Activated CD4-positive, alpha-beta T cell treated with anti-CD3 and anti-CD28 coated beads for 36 hours (primary cell): ENCODE measurements at regions of chr17 and their contacts with region 1.

Region 1: DNA sequence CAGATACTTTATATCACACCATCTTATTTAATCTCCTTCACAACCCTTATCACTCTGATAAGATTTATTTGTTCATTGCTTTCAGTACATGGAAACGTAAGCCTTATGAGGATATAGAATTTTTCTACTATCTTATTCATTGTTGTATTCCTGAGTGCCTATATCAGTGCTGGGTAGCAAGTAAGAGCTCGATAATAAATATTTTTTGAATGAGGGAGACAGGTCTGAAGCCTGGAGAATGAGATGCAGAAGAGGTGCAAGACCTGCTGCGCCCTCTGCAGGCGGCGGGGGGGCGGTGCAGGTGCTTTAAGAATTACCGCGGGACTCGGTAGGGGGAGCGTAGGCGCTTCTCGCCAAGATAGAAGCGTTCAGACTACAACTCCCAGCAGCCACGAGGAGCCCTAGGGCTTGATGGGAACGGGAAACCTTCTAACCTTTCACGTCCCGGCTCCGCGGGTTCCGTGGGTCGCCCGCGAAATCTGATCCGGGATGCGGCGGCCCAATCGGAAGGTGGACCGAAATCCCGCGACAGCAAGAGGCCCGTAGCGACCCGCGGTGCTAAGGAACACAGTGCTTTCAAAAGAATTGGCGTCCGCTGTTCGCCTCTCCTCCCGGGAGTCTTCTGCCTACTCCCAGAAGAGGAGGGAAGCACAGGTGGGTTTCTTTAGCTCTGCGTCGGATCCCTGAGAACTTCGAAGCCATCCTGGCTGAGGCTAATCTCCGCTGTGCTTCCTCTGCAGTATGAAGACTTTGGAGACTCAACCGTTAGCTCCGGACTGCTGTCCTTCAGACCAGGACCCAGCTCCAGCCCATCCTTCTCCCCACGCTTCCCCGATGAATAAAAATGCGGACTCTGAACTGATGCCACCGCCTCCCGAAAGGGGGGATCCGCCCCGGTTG is at the start of gene WRAP53:
- DNase-seq: peak; percentile 97
- ATAC-seq: peak; percentile 81
- H3K4me3 Mint-ChIP-seq: peak within 1 kb of the TSS; percentile 83
- H3K27ac Mint-ChIP-seq: peak within 1 kb of the TSS; percentile 97
- H3K4me1 Mint-ChIP-seq: peaks cover 35% of the 10 kb centered on the region
- H3K27me3 Mint-ChIP-seq: no peaks in the 10 kb centered on the region
- total RNA-seq, gene WRAP53: 23.5 to 27.1 TPM

Region 2: DNA sequence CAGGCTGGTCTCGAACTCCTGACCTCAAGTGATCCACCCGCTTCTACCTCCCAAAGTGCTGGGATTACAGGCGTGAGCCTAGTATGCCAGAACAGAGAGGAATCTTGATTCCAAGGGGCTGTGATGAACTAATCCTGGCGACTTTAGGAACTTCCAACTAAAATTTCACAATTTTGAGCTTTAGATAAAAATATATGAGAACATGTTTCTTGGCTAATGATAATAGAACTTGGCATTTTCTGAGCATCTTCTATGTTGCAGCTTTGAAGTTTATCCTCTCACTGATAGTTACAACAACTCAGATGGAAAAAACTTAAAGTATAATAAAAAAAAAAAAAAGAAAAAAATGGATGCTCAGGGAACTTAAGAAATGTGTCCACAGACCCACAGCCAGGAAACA is 1687.7 kb before region 1 on chr17:
- CTCF ChIA-PET with region 1: no interaction called
- POLR2A ChIA-PET with region 1: no interaction called
- intact Hi-C with region 1: no loop called
- DNase-seq: no peak
- ATAC-seq: no peak
- H3K4me3 Mint-ChIP-seq: no peak overlapping the region
- H3K27ac Mint-ChIP-seq: no peak overlapping the region
- H3K4me1 Mint-ChIP-seq: no peaks in the 10 kb centered on the region
- H3K27me3 Mint-ChIP-seq: peaks cover 12% of the 10 kb centered on the region

Region 3: GRCh38 chr17:7252176-7253043 is 435.7 kb before region 1 on chr17 and contains the start of gene ELP5:
- CTCF ChIA-PET with region 1: no interaction called
- POLR2A ChIA-PET with region 1: no interaction called
- intact Hi-C with region 1: loop called in 1 of 2 experiments (anchors 1 kb)
- DNase-seq: peak; percentile 94
- ATAC-seq: peak; percentile 65
- H3K4me3 Mint-ChIP-seq: peak within 1 kb of the TSS; percentile 93
- H3K27ac Mint-ChIP-seq: peak within 1 kb of the TSS; percentile 99
- H3K4me1 Mint-ChIP-seq: peaks cover 40% of the 10 kb centered on the region
- H3K27me3 Mint-ChIP-seq: no peaks in the 10 kb centered on the region
- total RNA-seq, gene ELP5: 58.1 to 62.3 TPM

Region 4: GRCh38 chr17:7454980-7455379 is 233.2 kb before region 1 on chr17:
- CTCF ChIA-PET with region 1: no interaction called
- POLR2A ChIA-PET with region 1: no interaction called
- intact Hi-C with region 1: loop called in 1 of 2 experiments (anchors 1 kb)
- DNase-seq: no peak
- ATAC-seq: no peak
- H3K4me3 Mint-ChIP-seq: peak overlapping the region; percentile 96
- H3K27ac Mint-ChIP-seq: peak overlapping the region; percentile 93
- H3K4me1 Mint-ChIP-seq: peaks cover 19% of the 10 kb centered on the region
- H3K27me3 Mint-ChIP-seq: no peaks in the 10 kb centered on the region

Region 5: GRCh38 chr17:7583253-7584109 is 104.7 kb before region 1 on chr17 and contains the start of gene MPDU1:
- CTCF ChIA-PET with region 1: interaction called, 16 read pairs
- POLR2A ChIA-PET with region 1: interaction called, 39 read pairs
- intact Hi-C with region 1: loop called (anchors 1 kb)
- DNase-seq: peak; percentile 98
- ATAC-seq: peak; percentile 77
- H3K4me3 Mint-ChIP-seq: peak within 1 kb of the TSS; percentile 82
- H3K27ac Mint-ChIP-seq: peak within 1 kb of the TSS; percentile 100
- H3K4me1 Mint-ChIP-seq: peaks cover 56% of the 10 kb centered on the region
- H3K27me3 Mint-ChIP-seq: no peaks in the 10 kb centered on the region
- total RNA-seq, gene MPDU1: 51.7 to 77.0 TPM

Region 6: DNA sequence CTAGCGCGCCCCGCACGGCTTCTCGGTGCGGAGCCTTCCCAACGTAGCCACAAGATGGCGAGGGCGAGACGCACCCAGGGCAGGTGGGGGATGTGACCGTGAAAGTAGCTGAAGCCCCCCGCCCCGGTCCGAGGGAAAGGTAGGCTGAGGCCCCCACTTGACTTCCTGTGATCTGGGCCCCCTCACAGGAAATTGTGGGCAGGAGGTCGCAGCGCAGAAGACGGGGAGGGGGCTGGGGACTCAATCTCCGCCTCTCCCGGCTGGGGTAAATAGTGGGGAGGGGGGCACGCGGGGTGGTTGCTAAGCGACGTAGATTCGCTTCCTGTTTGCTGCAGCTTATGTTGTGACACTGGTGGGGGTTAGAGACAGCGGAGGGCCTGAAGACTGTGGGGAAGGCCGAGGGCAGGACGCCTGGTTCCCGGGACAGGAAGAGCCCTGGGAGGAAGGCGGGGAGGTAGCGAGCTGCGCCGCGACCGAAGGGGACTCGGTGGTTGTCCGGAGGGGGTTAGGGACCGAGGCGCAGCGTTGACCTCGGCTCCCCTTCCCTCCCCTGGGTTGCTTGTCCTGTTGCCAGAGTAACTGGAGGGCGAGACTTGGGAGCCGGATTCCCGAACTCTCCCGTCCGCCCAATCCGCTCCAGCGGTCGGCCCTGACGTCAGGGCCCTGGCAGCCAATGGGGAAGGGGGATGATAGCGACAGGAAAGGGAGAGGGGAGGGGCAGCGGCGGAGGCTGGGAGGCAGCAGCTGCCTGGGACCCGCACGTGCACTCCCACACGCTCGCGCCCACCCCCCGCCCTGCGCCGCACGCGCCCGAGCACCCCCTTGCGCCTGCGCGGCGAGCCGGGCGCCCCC is 147.0 kb after region 1 on chr17:
- CTCF ChIA-PET with region 1: interaction called, 5 read pairs
- POLR2A ChIA-PET with region 1: interaction called, 4 read pairs
- intact Hi-C with region 1: loop called (anchors 1 to 5 kb)
- DNase-seq: peak; percentile 96
- ATAC-seq: peak; percentile 57
- H3K4me3 Mint-ChIP-seq: peak overlapping the region; percentile 93
- H3K27ac Mint-ChIP-seq: peak overlapping the region; percentile 91
- H3K4me1 Mint-ChIP-seq: peaks cover 42% of the 10 kb centered on the region
- H3K27me3 Mint-ChIP-seq: no peaks in the 10 kb centered on the region

Region 7: GRCh38 chr17:8156246-8156992 is 468.3 kb after region 1 on chr17:
- CTCF ChIA-PET with region 1: no interaction called
- POLR2A ChIA-PET with region 1: no interaction called
- intact Hi-C with region 1: loop called in 1 of 2 experiments (anchors 1 kb)
- DNase-seq: peak; percentile 100
- ATAC-seq: peak; percentile 75
- H3K4me3 Mint-ChIP-seq: no peak overlapping the region
- H3K27ac Mint-ChIP-seq: no peak overlapping the region
- H3K4me1 Mint-ChIP-seq: peaks cover 49% of the 10 kb centered on the region
- H3K27me3 Mint-ChIP-seq: no peaks in the 10 kb centered on the region

Region 8: GRCh38 chr17:8275421-8276290 is 587.5 kb after region 1 on chr17:
- CTCF ChIA-PET with region 1: no interaction called
- POLR2A ChIA-PET with region 1: no interaction called
- intact Hi-C with region 1: no loop called
- DNase-seq: no peak
- ATAC-seq: no peak
- H3K4me3 Mint-ChIP-seq: no peak overlapping the region
- H3K27ac Mint-ChIP-seq: no peak overlapping the region
- H3K4me1 Mint-ChIP-seq: no peaks in the 10 kb centered on the region
- H3K27me3 Mint-ChIP-seq: no peaks in the 10 kb centered on the region